Naive thymus-derived CD4-positive, alpha-beta T cell (primary cell): ENCODE measurements at regions of chr1 and their contacts with region 1.

Region 1: DNA sequence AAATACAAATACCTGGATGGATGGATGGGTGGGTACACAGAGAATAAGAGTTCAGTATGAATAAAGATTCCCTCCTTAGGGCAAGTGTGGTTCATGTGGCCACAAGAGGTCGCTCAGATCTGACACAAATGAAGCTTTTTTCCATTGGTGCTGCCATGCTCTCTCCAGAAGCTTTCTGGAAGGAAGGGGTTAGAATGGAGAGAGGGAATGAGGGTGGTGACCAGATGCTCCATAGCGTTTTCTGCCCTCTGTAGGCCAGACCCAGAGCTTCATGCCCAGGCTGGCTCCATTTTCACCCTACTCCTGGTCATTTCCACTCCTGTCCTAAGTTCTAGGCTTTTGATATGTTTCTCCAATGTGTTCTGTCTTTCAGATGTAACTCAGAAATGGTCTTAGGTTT is 3.3 kb upstream of the FCRL6 start:
- DNase-seq: peak in 8 of 9 donors; percentile 11 to 52 (median 34)
- ATAC-seq: peak; percentile 66
- H3K4me3 ChIP-seq: no peak overlapping the region
- H3K4me3 Mint-ChIP-seq: no peak overlapping the region
- H3K27ac ChIP-seq: no peak overlapping the region
- H3K27ac Mint-ChIP-seq: no peak overlapping the region
- H3K4me1 ChIP-seq: peaks cover 8 to 48% of the 10 kb centered on the region in 2 donors
- H3K4me1 Mint-ChIP-seq: peaks cover 13 to 24% (median 16%) of the 10 kb centered on the region in 7 donors
- H3K27me3 ChIP-seq: no peaks in the 10 kb centered on the region
- H3K27me3 Mint-ChIP-seq: peaks cover 0 to 55% (median 3%) of the 10 kb centered on the region in 5 donors

Region 2: DNA sequence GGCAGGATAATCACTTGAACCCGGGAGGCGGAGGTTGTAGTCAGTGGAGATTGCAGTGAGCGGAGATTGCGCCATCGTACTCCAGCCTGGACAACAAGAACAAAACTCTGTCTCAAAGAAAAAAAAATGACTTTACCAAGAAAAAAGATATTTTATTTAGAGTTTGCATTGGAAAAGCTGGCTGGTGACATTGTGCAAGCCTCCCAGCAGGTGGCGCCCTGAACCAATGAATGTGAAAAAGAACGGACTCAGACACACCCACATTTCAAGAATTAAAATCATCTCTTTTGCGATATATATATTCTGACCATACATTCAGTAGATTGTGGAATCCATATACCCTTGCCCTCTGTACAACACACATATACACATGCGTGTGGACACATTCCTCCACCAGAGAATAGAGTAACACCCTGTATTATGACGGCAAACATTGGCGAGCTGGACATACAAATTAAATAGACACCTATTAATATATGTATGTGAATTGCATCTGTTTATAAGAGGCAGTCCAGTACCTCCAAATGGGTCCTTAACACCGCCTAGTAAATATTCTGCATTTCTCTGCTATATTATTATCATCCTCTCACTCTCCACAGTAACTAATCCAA is 666.5 kb before region 1 on chr1:
- CTCF ChIA-PET with region 1: no interaction called
- POLR2A ChIA-PET with region 1: no interaction called
- intact Hi-C with region 1: loop called in 1 of 2 experiments (anchors 10 kb)
- DNase-seq: peak in 8 of 9 donors; percentile 19 to 68 (median 45)
- ATAC-seq: peak; percentile 67
- H3K4me3 ChIP-seq: no peak overlapping the region
- H3K4me3 Mint-ChIP-seq: no peak overlapping the region
- H3K27ac ChIP-seq: no peak overlapping the region
- H3K27ac Mint-ChIP-seq: no peak overlapping the region
- H3K4me1 ChIP-seq: no peaks in the 10 kb centered on the region
- H3K4me1 Mint-ChIP-seq: no peaks in the 10 kb centered on the region
- H3K27me3 ChIP-seq: no peaks in the 10 kb centered on the region
- H3K27me3 Mint-ChIP-seq: peaks cover 0 to 13% (median 9%) of the 10 kb centered on the region in 5 donors

Region 3: GRCh38 chr1:159854693-159855192 is 55.9 kb after region 1 on chr1:
- CTCF ChIA-PET with region 1: interaction called, 7 read pairs
- POLR2A ChIA-PET with region 1: no interaction called
- intact Hi-C with region 1: loop called in 1 of 2 experiments (anchors 2 kb)
- DNase-seq: peak; percentile 53 to 72 (median 70)
- ATAC-seq: peak; percentile 91
- H3K4me3 ChIP-seq: peak overlapping the region; percentile 69
- H3K4me3 Mint-ChIP-seq: peak overlapping the region; percentile 80 to 96 (median 91)
- H3K27ac ChIP-seq: peak overlapping the region; percentile 75
- H3K27ac Mint-ChIP-seq: peak overlapping the region in 8 of 9 donors; percentile 67 to 94 (median 88)
- H3K4me1 ChIP-seq: peaks cover 0 to 3% of the 10 kb centered on the region in 2 donors
- H3K4me1 Mint-ChIP-seq: peaks cover 14 to 37% (median 23%) of the 10 kb centered on the region in 7 donors
- H3K27me3 ChIP-seq: no peaks in the 10 kb centered on the region
- H3K27me3 Mint-ChIP-seq: peaks cover 0 to 32% (median 0%) of the 10 kb centered on the region in 5 donors

Region 4: DNA sequence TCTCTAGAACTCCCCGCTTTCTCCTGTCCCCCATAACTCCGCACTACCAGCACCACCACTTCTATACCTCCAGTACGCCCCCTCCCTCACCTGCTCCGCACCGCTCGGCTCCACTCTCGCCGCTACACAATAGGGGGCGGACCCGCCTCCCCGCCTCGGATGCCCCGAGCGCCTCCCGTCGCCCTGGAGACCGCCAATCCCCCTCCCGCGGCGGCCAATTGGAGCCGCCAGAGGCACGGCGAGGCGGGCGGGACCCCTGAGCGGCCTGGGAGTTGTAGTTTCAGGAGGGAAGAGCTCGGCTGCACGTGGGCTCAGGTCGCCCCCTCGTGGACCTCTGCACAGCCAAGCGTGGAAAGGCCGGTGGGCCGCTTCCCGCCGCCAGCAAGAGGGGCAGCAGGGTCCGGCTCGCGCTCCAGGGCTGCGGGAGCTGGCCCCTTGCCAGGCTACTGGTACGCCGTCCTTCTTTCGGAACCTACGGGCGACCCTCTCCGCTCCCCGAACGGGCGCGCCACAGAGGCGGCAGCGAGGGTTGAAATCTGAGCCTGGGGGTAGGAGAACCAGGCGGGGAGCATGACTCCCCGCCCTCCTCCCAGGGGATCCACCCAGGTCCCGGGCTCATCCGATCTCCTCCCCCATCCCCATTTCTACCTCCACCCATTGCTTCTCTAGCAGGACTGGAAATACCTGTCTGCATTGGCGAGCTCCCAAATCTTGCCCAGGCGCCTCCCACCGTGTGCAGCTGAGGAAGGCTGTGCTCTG is 146.8 kb after region 1 on chr1 and contains the start of gene IGSF9:
- CTCF ChIA-PET with region 1: interaction called, 16 read pairs
- POLR2A ChIA-PET with region 1: no interaction called
- intact Hi-C with region 1: loop called (anchors 1 to 2 kb)
- DNase-seq: peak in 8 of 9 donors; percentile 60 to 84 (median 76)
- ATAC-seq: peak; percentile 95
- H3K4me3 ChIP-seq: peak within 1 kb of the TSS; percentile 57
- H3K4me3 Mint-ChIP-seq: peak within 1 kb of the TSS; percentile 50 to 79 (median 72)
- H3K27ac ChIP-seq: no peak within 1 kb of the TSS
- H3K27ac Mint-ChIP-seq: peak within 1 kb of the TSS in 3 of 9 donors; percentile 9 to 69 (median 17)
- H3K4me1 ChIP-seq: peaks cover 4 to 7% of the 10 kb centered on the region in 2 donors
- H3K4me1 Mint-ChIP-seq: peaks cover 8 to 18% (median 14%) of the 10 kb centered on the region in 7 donors
- H3K27me3 ChIP-seq: peaks cover 8 to 11% of the 10 kb centered on the region in 2 donors
- H3K27me3 Mint-ChIP-seq: peaks cover 23 to 73% (median 30%) of the 10 kb centered on the region in 5 donors
- total RNA-seq, gene IGSF9: 0.12 TPM in 1 of 5 experiments, not detected in the others

Region 5: DNA sequence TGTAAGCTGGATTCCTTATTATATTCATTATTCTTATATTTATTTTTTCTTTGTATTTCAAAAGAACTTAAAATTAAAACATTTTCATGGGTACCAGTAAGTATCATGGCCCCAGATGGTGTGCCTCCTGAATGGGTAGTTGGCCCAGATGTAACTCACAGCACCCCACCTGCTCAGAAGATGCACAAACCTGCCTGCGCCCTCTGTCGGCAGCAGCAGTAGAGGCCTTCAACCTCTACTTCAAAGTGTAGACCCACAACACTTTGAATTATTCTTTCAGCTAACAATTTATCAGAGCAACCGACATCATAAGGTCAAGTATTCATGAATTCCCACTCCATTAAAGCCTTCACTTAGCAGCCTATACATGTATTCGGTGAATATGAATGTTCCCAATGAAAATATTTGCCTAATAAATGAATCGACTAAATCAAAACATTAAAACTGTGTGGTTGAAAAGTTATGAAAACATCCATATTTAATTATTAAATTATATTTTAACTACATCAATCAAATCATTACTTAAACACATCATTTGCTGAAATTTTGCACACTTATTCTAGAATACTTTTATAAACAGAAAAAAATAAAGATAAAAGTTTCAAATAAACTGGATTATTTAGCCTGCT is 207.5 kb after region 1 on chr1:
- CTCF ChIA-PET with region 1: interaction called, 19 read pairs
- POLR2A ChIA-PET with region 1: no interaction called
- intact Hi-C with region 1: loop called (anchors 1 kb)
- DNase-seq: peak; percentile 38 to 67 (median 61)
- ATAC-seq: peak; percentile 88
- H3K4me3 ChIP-seq: no peak overlapping the region
- H3K4me3 Mint-ChIP-seq: no peak overlapping the region
- H3K27ac ChIP-seq: no peak overlapping the region
- H3K27ac Mint-ChIP-seq: no peak overlapping the region
- H3K4me1 ChIP-seq: no peaks in the 10 kb centered on the region
- H3K4me1 Mint-ChIP-seq: no peaks in the 10 kb centered on the region
- H3K27me3 ChIP-seq: no peaks in the 10 kb centered on the region
- H3K27me3 Mint-ChIP-seq: peaks cover 0 to 33% (median 6%) of the 10 kb centered on the region in 5 donors

Region 6: DNA sequence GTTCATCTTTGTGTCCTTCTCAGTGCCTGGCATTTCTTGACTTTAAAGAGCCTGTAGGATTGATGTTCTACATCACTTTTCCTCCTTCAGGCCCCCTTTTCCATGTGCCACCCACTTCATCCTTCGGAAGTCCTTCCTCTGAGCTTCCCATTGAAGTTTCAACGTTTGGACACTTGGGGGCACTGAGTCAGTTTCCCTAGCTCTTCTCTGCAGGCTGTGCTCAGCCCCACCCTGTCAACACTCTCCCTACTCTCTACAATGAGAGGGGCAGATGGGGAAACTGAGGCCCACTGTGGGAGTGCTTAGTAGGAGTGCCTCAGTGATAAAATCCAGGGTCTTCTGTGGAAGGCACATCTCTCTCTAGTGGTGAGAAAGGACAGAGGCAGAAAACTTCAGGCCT is 259.2 kb after region 1 on chr1:
- CTCF ChIA-PET with region 1: no interaction called
- POLR2A ChIA-PET with region 1: no interaction called
- intact Hi-C with region 1: no loop called
- DNase-seq: no peak
- ATAC-seq: no peak
- H3K4me3 ChIP-seq: no peak overlapping the region
- H3K4me3 Mint-ChIP-seq: no peak overlapping the region
- H3K27ac ChIP-seq: no peak overlapping the region
- H3K27ac Mint-ChIP-seq: no peak overlapping the region
- H3K4me1 ChIP-seq: no peaks in the 10 kb centered on the region
- H3K4me1 Mint-ChIP-seq: peaks cover 0 to 4% (median 0%) of the 10 kb centered on the region in 7 donors
- H3K27me3 ChIP-seq: no peaks in the 10 kb centered on the region
- H3K27me3 Mint-ChIP-seq: peaks cover 8 to 44% (median 25%) of the 10 kb centered on the region in 5 donors